AG04449 (cell line): ENCODE measurements at regions of chr18 and their contacts with region 1.

Region 1: GRCh38 chr18:3869848-3870247 is 419.9 kb downstream of the TGIF1 start:
- DNase-seq: no peak
- H3K4me3 ChIP-seq: no peak overlapping the region
- CTCF ChIP-seq: peak; percentile 28

Region 2: GRCh38 chr18:3493501-3494244 is 376.2 kb before region 1 on chr18:
- CTCF ChIA-PET with region 1: no interaction called
- POLR2A ChIA-PET with region 1: no interaction called
- DNase-seq: no peak
- H3K4me3 ChIP-seq: no peak overlapping the region
- CTCF ChIP-seq: no peak

Region 3: DNA sequence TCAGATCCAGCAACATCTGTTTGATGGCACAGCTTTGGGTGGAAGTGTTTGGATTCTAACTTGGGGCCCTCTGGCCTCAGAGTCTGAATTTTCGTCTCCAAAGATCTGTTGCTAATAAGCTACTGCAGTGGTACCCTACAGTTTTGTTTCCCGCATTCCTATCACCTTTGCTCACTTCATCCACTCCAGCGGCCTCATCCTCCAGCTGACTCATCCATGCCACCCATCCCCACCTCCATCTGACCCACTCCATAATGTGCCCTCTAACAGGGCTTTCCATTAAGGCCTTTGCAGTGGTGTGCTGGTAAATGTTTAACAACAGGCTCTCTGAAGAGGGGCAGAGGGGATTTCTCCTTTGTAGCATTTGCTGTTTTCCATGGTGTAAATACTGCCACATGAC is 194.4 kb before region 1 on chr18:
- CTCF ChIA-PET with region 1: interaction called, 14 read pairs
- POLR2A ChIA-PET with region 1: no interaction called
- DNase-seq: no peak
- H3K4me3 ChIP-seq: no peak overlapping the region
- CTCF ChIP-seq: no peak

Region 4: DNA sequence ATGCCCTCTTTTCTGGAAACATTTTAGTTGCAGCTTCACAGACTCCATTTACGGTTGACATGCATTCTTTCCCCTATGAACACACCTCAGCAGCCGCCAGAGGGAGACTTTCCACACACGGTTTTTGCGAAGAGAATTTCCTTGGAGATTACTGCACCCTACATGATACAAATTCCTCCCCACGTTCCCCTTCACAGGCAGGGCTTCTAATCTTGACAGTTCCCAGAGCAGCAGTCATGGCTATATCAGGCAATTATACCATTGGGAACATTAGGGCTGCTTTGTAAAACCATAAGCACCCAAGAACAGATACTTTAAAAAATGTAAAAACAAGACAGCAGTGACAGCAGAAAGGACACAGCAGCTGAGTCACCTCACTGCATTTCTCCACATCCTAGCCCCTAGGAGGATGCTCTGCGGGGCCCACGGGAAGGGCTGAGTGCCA is 166.1 kb before region 1 on chr18:
- CTCF ChIA-PET with region 1: interaction called, 121 read pairs
- POLR2A ChIA-PET with region 1: interaction called, 3 read pairs
- DNase-seq: peak; percentile 12
- H3K4me3 ChIP-seq: no peak overlapping the region
- CTCF ChIP-seq: peak; percentile 81

Region 5: GRCh38 chr18:3857544-3857943 is 12.3 kb before region 1 on chr18:
- CTCF ChIA-PET with region 1: interaction called, 40 read pairs
- POLR2A ChIA-PET with region 1: no interaction called
- DNase-seq: no peak
- H3K4me3 ChIP-seq: no peak overlapping the region
- CTCF ChIP-seq: no peak

Region 6: DNA sequence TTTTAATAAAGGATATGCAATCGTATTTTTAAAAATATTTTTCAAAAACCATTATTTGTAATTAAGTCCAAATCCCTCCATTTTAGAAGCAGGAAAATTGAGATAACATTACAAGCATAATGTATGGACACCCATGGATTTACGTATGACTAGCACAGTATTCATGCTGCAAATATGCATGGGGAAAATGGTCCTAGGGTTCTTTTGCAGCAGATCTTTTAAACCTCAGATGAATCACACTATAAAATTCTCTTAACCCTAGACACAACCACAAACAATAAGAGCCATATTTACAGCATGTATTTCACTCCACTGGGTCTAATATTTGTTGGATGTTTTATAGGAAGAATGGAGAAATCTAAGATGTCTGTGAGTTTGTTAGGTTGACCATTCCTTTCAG is 33.5 kb after region 1 on chr18:
- CTCF ChIA-PET with region 1: interaction called, 11 read pairs
- POLR2A ChIA-PET with region 1: no interaction called
- DNase-seq: peak; percentile 87
- H3K4me3 ChIP-seq: no peak overlapping the region
- CTCF ChIP-seq: no peak